ENCODE measurements at regions of chr7 and their contacts with region 1.

Region 1: GRCh38 chr7:25851332-25852210 is 300.4 kb upstream of the NFE2L3 start:
- DNase-seq: no peak
- ATAC-seq: peak; percentile 46
- H3K4me3 ChIP-seq: no peak overlapping the region
- H3K27ac ChIP-seq: no peak overlapping the region
- H3K4me1 ChIP-seq: peaks cover 3 to 17% of the 10 kb centered on the region in 2 experiments; a peak in 3 of 4 replicates
- H3K27me3 ChIP-seq: peaks cover 12% of the 10 kb centered on the region; the same call in 1 of the 2 replicates
- CTCF ChIP-seq: peak; percentile 56 to 67 (median 62); a peak in 5 of 6 replicates
- POLR2A ChIP-seq: no peak
- RAD21 ChIP-seq: peak; percentile 70

Region 2: GRCh38 chr7:25259587-25260243 is 591.9 kb before region 1 on chr7:
- CTCF ChIA-PET with region 1: interaction called, 3 read pairs
- POLR2A ChIA-PET with region 1: no interaction called
- RAD21 ChIA-PET with region 1: no interaction called
- intact Hi-C with region 1: loop called (anchors 1 kb)
- DNase-seq: peak; percentile 44
- ATAC-seq: peak; percentile 91
- H3K4me3 ChIP-seq: no peak overlapping the region
- H3K27ac ChIP-seq: no peak overlapping the region
- H3K4me1 ChIP-seq: peaks cover 0 to 8% of the 10 kb centered on the region in 2 experiments; a peak in 2 of 4 replicates
- H3K27me3 ChIP-seq: peaks cover 41% of the 10 kb centered on the region
- CTCF ChIP-seq: peak; percentile 73 to 91 (median 77)
- POLR2A ChIP-seq: no peak
- RAD21 ChIP-seq: peak; percentile 84

Region 3: DNA sequence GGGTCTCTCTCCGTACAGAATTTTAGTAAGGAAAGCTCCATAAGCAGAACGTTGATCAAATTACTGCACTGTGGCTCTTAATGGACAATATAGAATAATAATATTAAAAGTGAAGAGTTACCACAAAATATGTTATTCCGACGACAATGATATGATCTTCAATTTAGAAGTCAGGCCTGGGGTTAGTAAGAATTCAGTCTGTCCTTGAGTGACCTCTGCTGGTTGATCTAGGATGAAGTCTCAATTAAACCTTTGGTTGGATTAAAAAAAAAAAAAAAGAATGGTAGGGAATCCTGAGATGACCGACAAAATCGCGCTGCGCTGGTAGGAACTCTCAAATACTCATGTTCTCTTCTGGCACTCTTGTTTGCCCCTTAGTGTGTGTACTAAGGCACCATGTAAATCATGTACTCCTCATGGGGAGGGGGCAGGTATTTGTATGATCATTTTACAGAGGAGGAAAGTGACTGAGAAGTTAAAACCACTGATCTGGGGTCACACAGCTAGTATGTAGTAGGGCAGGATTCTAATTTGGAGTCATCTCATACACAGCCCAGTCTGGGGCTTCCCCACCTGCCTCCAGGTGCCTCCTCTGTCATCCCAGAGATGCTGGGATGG is 462.0 kb before region 1 on chr7:
- CTCF ChIA-PET with region 1: interaction called, 16 read pairs
- POLR2A ChIA-PET with region 1: no interaction called
- RAD21 ChIA-PET with region 1: no interaction called
- intact Hi-C with region 1: loop called (anchors 2 kb)
- DNase-seq: peak; percentile 31
- ATAC-seq: peak; percentile 59
- H3K4me3 ChIP-seq: no peak overlapping the region
- H3K27ac ChIP-seq: no peak overlapping the region
- H3K4me1 ChIP-seq: no peaks in the 10 kb centered on the region
- H3K27me3 ChIP-seq: peaks cover 27% of the 10 kb centered on the region
- CTCF ChIP-seq: peak; percentile 27 to 47 (median 45); a peak in 4 of 6 replicates
- POLR2A ChIP-seq: no peak
- RAD21 ChIP-seq: peak; percentile 58

Region 4: GRCh38 chr7:25565949-25566348 is 285.6 kb before region 1 on chr7:
- CTCF ChIA-PET with region 1: interaction called, 7 read pairs
- POLR2A ChIA-PET with region 1: no interaction called
- RAD21 ChIA-PET with region 1: no interaction called
- intact Hi-C with region 1: loop called (anchors 1 kb)
- DNase-seq: peak; percentile 44
- ATAC-seq: no peak
- H3K4me3 ChIP-seq: no peak overlapping the region
- H3K27ac ChIP-seq: no peak overlapping the region
- H3K4me1 ChIP-seq: peaks cover 0 to 8% of the 10 kb centered on the region in 2 experiments; a peak in 1 of 4 replicates
- H3K27me3 ChIP-seq: peaks cover 41% of the 10 kb centered on the region
- CTCF ChIP-seq: peak; percentile 99 to 100 (median 100)
- POLR2A ChIP-seq: no peak
- RAD21 ChIP-seq: peak; percentile 86

Region 5: DNA sequence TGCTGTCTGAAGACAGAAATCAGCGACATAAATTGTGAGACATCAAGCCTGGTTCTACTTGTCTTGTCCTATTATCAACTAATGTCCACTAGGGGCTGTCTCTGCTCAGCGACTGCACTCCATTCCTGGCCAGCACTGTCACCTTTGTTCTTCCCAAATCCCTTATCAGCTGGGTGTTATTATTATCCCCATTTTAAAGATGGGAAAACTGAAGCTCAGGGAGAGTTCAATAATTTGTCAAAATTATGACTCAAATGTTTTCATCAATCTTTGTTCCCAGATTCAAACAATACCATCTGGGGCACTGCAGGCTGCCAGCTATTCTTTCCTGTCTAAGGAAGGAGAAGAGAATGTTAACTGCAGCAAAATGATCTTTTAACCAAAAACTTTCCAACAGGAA is 131.1 kb before region 1 on chr7:
- CTCF ChIA-PET with region 1: interaction called, 5 read pairs
- POLR2A ChIA-PET with region 1: no interaction called
- RAD21 ChIA-PET with region 1: no interaction called
- intact Hi-C with region 1: loop called (anchors 1 kb)
- DNase-seq: no peak
- ATAC-seq: peak; percentile 69; the same call in 1 of the 2 replicates
- H3K4me3 ChIP-seq: no peak overlapping the region
- H3K27ac ChIP-seq: no peak overlapping the region
- H3K4me1 ChIP-seq: no peaks in the 10 kb centered on the region
- H3K27me3 ChIP-seq: peaks cover 41% of the 10 kb centered on the region
- CTCF ChIP-seq: peak; percentile 32 to 65 (median 55); a peak in 5 of 6 replicates
- POLR2A ChIP-seq: no peak
- RAD21 ChIP-seq: peak; percentile 40

Region 6: DNA sequence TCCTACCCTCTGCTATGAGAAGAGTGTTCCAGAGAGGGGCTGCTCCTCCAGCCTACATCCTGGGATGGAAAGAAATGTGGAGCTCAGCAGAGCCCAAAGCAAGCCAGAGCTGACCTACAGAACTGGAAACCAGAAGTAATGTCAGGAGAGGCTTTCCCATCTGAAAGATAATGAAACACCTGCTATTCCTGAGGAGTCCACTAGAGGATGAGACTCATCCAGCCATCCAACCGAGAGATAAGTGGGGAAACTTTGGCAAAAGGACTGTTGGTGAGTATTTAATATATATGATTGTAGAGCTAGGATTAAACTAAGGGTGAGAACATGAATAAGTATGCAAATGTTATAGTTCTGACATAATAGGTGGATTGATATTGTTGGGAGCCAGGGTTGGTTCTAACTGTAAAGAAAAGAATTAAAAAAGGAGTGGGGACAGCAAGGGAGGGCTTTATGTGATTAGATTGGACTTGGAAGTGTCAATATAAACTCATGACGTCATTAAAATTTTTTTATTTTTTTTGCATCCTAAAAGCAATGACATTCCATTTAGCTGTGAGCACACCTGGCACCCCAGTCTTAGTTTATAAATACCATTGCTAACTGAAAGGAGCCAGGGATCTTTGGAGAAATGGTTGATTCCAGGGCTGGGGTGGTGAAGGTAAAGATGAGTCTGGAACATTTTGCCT is 12.3 kb before region 1 on chr7:
- CTCF ChIA-PET with region 1: interaction called, 13 read pairs
- POLR2A ChIA-PET with region 1: no interaction called
- RAD21 ChIA-PET with region 1: no interaction called
- intact Hi-C with region 1: no loop called
- DNase-seq: no peak
- ATAC-seq: peak; percentile 87
- H3K4me3 ChIP-seq: no peak overlapping the region
- H3K27ac ChIP-seq: no peak overlapping the region
- H3K4me1 ChIP-seq: no peaks in the 10 kb centered on the region
- H3K27me3 ChIP-seq: 0 out of 2 replicates have a peak, but pooled peaks cover 5% of the 10 kb centered on the region
- CTCF ChIP-seq: peak in 2 of 3 experiments; percentile 53 to 57; a peak in 4 of 6 replicates
- POLR2A ChIP-seq: no peak
- RAD21 ChIP-seq: no peak; the same call in 1 of the 2 replicates

Measured in HCT116 (cell line).